Heart right ventricle (tissue), 16 donors: ENCODE measurements at regions of chr9 and their contacts with region 1.

Region 1: GRCh38 chr9:15543047-15543813 is 9.6 kb upstream of the CCDC171 start:
- DNase-seq: no peak
- ATAC-seq: no peak
- H3K4me3 ChIP-seq: no peak overlapping the region
- H3K27ac ChIP-seq: no peak overlapping the region
- H3K4me1 ChIP-seq: no peaks in the 10 kb centered on the region
- H3K27me3 ChIP-seq: peaks cover 0 to 4% (median 0%) of the 10 kb centered on the region in 7 donors
- CTCF ChIP-seq: no peak

Region 2: GRCh38 chr9:14180093-14180959 is 1362.9 kb before region 1 on chr9:
- intact Hi-C with region 1: no loop called
- DNase-seq: peak; percentile 35 to 44
- ATAC-seq: peak; percentile 54 to 76 (median 68)
- H3K4me3 ChIP-seq: peak overlapping the region in 6 of 10 donors; percentile 8 to 34 (median 25)
- H3K27ac ChIP-seq: peak overlapping the region in 9 of 10 donors; percentile 20 to 76 (median 53)
- H3K4me1 ChIP-seq: peaks cover 3 to 69% (median 48%) of the 10 kb centered on the region in 9 donors
- H3K27me3 ChIP-seq: no peaks in the 10 kb centered on the region
- CTCF ChIP-seq: no peak

Region 3: GRCh38 chr9:15492485-15493150 is 50.6 kb before region 1 on chr9:
- intact Hi-C with region 1: loop called in 1 of 10 experiments (anchors 5 kb)
- DNase-seq: no peak
- ATAC-seq: no peak
- H3K4me3 ChIP-seq: no peak overlapping the region
- H3K27ac ChIP-seq: no peak overlapping the region
- H3K4me1 ChIP-seq: peaks cover 0 to 10% (median 0%) of the 10 kb centered on the region in 9 donors
- H3K27me3 ChIP-seq: no peaks in the 10 kb centered on the region
- CTCF ChIP-seq: no peak

Region 4: DNA sequence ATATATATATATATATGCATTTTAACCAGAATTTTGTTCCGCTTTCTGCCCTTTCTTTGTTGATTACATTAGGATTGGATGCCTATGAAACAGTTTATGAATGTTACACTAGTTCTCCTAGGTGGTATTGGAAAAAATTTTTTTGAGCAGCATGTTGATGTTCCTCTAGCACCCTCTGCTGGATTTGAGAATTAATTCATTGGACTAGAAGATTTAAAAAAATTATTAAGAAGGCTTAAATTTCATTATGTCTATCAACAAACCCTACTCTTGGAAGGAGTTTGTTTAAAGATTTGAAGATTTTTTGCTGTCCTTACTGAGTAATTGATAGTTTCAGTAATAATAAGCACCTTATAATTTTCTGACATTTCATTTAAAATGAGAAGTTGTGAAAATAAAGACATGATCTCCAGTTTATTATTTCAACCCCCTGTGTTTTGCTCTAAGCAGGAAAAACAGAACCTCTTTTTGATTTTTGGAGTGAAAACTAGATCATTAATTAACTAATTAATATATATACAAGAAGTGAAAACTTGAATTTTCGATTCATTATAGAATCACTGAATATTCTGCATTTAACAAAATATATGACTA is 99.2 kb after region 1 on chr9:
- intact Hi-C with region 1: no loop called
- DNase-seq: no peak
- ATAC-seq: no peak
- H3K4me3 ChIP-seq: no peak overlapping the region
- H3K27ac ChIP-seq: no peak overlapping the region
- H3K4me1 ChIP-seq: no peaks in the 10 kb centered on the region
- H3K27me3 ChIP-seq: no peaks in the 10 kb centered on the region
- CTCF ChIP-seq: peak in 7 of 9 donors; percentile 38 to 63 (median 58)